IMR-90 (cell line): ENCODE measurements at regions of chr13 and their contacts with region 1.

Region 1: DNA sequence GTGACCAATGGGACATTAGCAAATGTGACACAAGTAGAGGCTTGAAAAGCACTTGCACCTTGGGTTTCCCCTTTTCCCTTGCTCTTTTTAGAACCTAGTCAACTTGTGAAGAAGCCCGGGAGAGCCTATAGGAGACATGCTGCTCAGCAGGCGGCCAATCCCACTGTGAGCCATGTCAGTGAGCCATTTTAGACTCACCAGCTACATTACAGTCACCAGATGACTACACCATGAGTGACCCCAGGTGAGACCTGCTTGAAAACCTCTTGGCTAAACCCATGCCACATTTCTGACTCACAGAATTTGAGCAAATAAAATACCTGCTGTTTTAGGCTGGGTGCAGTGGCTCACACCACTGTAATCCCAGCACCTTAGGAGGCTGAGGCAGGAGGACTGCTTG is 317.5 kb downstream of the KLF12 start:
- DNase-seq: no peak
- ATAC-seq: no peak
- H3K4me3 ChIP-seq: no peak overlapping the region
- H3K27ac ChIP-seq: no peak overlapping the region
- H3K4me1 ChIP-seq: peaks cover 2% of the 10 kb centered on the region; the same call in 1 of the 2 replicates
- H3K27me3 ChIP-seq: no peaks in the 10 kb centered on the region
- CTCF ChIP-seq: no peak
- POLR2A ChIP-seq: no peak
- RAD21 ChIP-seq: no peak

Region 2: GRCh38 chr13:74168263-74168675 is 351.6 kb after region 1 on chr13:
- CTCF ChIA-PET with region 1: no interaction called
- POLR2A ChIA-PET with region 1: interaction called, 16 read pairs
- dilution Hi-C with region 1: no loop called
- in situ Hi-C with region 1: no loop called
- intact Hi-C with region 1: no loop called
- DNase-seq: no peak
- ATAC-seq: no peak
- H3K4me3 ChIP-seq: no peak overlapping the region
- H3K27ac ChIP-seq: no peak overlapping the region
- H3K4me1 ChIP-seq: no peaks in the 10 kb centered on the region
- H3K27me3 ChIP-seq: no peaks in the 10 kb centered on the region
- CTCF ChIP-seq: no peak
- POLR2A ChIP-seq: no peak
- RAD21 ChIP-seq: no peak